Heart left ventricle (tissue), 16 donors: ENCODE measurements at regions of chrX and their contacts with region 1.

Region 1: DNA sequence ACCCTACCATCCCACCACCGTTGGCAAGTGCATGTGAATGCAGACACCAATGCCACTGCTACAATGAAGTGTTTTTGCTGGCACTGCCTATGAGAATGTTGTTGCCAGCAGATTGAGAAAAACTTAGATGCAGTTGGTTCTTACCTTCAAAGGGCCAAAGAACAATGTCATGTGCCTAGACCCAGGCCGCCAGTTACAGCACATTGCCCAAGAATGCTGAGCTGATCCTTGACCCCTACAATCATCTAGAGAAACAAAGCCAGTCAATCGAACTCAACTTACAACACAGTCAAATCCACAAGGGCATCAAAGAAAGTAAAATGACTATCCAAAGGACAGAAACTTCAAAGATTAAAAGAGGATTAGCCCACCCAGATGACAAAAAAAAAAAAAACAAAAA is 102.4 kb upstream of the SPIN4 start:
- DNase-seq: no peak
- ATAC-seq: no peak
- H3K4me3 ChIP-seq: no peak overlapping the region
- H3K27ac ChIP-seq: no peak overlapping the region
- H3K4me1 ChIP-seq: no peaks in the 10 kb centered on the region
- H3K27me3 ChIP-seq: no peaks in the 10 kb centered on the region
- CTCF ChIP-seq: no peak
- POLR2A ChIP-seq: no peak

Region 2: GRCh38 chrX:63394872-63395271 is 58.7 kb before region 1 on chrX:
- intact Hi-C with region 1: loop called in 1 of 10 experiments (anchors 10 kb)
- DNase-seq: no peak
- ATAC-seq: no peak
- H3K4me3 ChIP-seq: no peak overlapping the region
- H3K27ac ChIP-seq: no peak overlapping the region
- H3K4me1 ChIP-seq: no peaks in the 10 kb centered on the region
- H3K27me3 ChIP-seq: no peaks in the 10 kb centered on the region
- CTCF ChIP-seq: no peak
- POLR2A ChIP-seq: no peak

Region 3: DNA sequence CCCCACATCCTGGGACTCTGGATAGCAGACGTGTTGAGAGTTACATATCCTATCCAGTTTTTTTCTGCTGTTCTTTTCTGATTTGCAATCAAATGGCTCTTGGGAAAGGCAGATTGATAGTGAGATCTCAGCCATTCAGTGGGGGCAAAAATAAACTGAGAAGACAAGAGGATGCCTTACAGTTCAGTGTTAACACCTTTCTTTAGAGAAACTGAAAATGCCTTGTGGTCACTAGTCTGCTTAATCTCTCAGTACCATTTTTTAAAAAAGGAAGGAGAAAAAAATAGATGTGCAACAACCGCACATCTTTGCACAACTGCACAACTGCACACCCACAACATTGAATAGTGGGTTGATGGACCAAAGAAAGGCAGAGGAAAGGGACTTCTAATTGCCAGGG is 222.1 kb after region 1 on chrX:
- intact Hi-C with region 1: no loop called
- DNase-seq: no peak
- ATAC-seq: no peak
- H3K4me3 ChIP-seq: no peak overlapping the region
- H3K27ac ChIP-seq: no peak overlapping the region
- H3K4me1 ChIP-seq: no peaks in the 10 kb centered on the region
- H3K27me3 ChIP-seq: no peaks in the 10 kb centered on the region
- CTCF ChIP-seq: no peak
- POLR2A ChIP-seq: no peak

Region 4: GRCh38 chrX:63746278-63746677 is 292.7 kb after region 1 on chrX:
- intact Hi-C with region 1: no loop called
- DNase-seq: no peak
- ATAC-seq: no peak
- H3K4me3 ChIP-seq: no peak overlapping the region
- H3K27ac ChIP-seq: peak overlapping the region in 5 of 12 donors; percentile 47 to 81 (median 57)
- H3K4me1 ChIP-seq: peaks cover 0 to 61% (median 8%) of the 10 kb centered on the region in 12 donors
- H3K27me3 ChIP-seq: no peaks in the 10 kb centered on the region
- CTCF ChIP-seq: no peak
- POLR2A ChIP-seq: no peak